Activated CD4-positive, alpha-beta T cell treated with anti-CD3 and anti-CD28 coated beads, Interleukin-2, amount 10 ng/mL, durations not matched to agents 24 days and 14 days (primary cell): ENCODE measurements at regions of chr3 and their contacts with region 1.

Region 1: DNA sequence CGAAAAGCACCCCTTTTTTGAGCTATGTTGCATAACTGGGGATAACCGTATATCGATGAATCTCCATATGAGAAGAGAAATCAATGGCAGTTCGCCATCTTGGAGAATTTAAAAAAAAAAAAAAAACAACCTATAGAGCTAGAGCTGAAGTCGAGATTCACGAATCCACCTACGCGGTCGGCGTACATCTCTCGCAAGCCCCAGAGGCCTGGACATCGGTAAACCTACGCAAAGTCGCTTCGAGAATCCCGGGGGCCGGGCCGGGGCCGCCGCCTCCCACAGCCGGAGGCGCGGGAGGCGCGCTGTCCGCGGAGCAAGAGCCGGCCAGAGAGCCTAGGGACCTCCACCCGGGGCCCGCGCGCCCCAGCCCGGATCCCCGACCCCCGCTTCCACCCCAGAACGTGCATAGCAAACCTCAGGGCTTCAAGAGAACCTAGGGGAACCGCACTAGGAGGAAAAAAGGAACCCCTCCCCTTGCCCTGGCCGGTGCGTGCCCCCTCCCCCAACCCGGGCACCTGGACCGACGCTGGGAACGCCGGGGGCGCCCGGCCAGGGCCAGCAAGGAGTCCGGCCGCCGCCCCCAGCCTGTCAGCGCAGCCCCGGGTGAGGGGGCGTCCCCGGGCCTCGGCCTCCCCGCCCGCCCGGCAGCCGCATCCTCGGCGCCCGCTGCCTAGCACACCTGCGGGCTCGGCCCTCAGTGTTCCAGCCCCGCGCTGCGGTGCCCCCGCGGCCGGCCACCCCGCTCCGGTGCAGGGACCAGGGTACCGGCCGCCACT is 567 bp downstream of the PFN2 start:
- DNase-seq: peak; percentile 91
- H3K4me3 Mint-ChIP-seq: peak overlapping the region; percentile 88
- H3K27ac Mint-ChIP-seq: peak overlapping the region; percentile 72
- H3K4me1 Mint-ChIP-seq: peaks cover 15% of the 10 kb centered on the region
- H3K27me3 Mint-ChIP-seq: peaks cover 52% of the 10 kb centered on the region

Region 2: GRCh38 chr3:148518520-148518919 is 1451.6 kb before region 1 on chr3:
- intact Hi-C with region 1: no loop called
- DNase-seq: no peak
- H3K4me3 Mint-ChIP-seq: no peak overlapping the region
- H3K27ac Mint-ChIP-seq: no peak overlapping the region
- H3K4me1 Mint-ChIP-seq: no peaks in the 10 kb centered on the region
- H3K27me3 Mint-ChIP-seq: no peaks in the 10 kb centered on the region

Region 3: DNA sequence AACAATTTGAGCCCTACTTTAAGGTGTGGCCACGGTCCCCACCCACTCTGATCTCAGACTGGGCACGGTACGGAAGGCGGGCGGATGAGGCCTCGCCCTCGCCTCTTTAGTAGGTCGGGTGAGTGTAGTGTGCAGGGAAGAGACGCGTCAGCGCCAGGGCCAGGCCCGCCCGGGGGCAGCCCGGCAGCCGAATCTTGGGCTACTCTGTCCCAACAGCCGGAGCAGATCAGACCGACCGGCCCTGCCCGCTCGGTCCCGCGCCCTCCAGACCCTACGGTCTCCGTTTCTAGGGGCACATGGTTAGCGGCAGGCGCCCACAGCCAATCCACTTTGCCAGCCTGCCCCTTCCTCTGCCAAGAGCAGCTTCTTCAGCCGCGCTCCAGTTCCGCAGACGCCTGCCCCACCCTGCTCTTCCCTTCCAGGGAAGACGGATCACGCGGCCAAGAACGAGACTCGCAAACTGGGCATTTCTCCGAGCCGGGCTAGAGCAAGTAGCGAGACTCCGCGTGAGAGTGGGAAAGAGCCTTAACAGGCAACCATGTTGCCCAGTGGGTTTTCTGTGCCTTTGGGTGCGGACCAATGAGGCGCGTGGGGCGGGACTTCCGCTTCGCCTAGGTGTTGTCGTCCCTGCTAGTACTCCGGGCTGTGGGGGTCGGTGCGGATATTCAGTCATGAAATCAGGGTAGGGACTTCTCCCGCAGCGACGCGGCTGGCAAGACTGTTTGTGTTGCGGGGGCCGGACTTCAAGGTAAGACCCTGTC is 157.3 kb before region 1 on chr3 and contains the start of gene RNF13:
- intact Hi-C with region 1: loop called (anchors 10 kb)
- DNase-seq: peak; percentile 98
- H3K4me3 Mint-ChIP-seq: peak within 1 kb of the TSS; percentile 97
- H3K27ac Mint-ChIP-seq: peak within 1 kb of the TSS; percentile 100
- H3K4me1 Mint-ChIP-seq: peaks cover 44% of the 10 kb centered on the region
- H3K27me3 Mint-ChIP-seq: peaks cover 11% of the 10 kb centered on the region
- total RNA-seq, gene RNF13: 31.6 and 36.7 TPM in 2 replicates

Region 4: GRCh38 chr3:149936812-149937233 is 33.3 kb before region 1 on chr3:
- intact Hi-C with region 1: loop called (anchors 5 kb)
- DNase-seq: peak; percentile 77
- H3K4me3 Mint-ChIP-seq: no peak overlapping the region
- H3K27ac Mint-ChIP-seq: no peak overlapping the region
- H3K4me1 Mint-ChIP-seq: peaks cover 18% of the 10 kb centered on the region
- H3K27me3 Mint-ChIP-seq: no peaks in the 10 kb centered on the region

Region 5: GRCh38 chr3:150183678-150184425 is 213.7 kb after region 1 on chr3:
- intact Hi-C with region 1: loop called (anchors 1 kb)
- DNase-seq: peak; percentile 81
- H3K4me3 Mint-ChIP-seq: no peak overlapping the region
- H3K27ac Mint-ChIP-seq: no peak overlapping the region
- H3K4me1 Mint-ChIP-seq: no peaks in the 10 kb centered on the region
- H3K27me3 Mint-ChIP-seq: peaks cover 26% of the 10 kb centered on the region

Region 6: DNA sequence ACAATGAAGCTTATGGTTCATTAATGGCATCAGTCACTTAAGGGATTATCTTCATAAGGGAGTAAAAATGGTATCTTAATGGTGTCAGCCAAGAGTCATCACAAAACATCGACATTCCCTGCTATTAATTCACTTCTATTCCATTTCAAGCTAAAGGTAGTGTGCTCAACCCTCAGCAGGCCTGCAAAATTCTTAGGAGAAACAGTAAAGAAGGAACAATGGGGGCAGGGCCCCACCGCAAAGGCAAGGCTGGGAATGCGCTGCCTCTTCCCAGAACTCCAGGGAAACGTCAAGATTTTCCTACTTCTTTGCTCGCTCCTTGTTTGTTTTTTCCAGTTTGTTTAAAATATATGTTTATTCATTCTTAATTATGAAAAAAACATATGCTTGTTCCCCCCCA is 250.7 kb after region 1 on chr3:
- intact Hi-C with region 1: loop called (anchors 2 kb)
- DNase-seq: no peak
- H3K4me3 Mint-ChIP-seq: no peak overlapping the region
- H3K27ac Mint-ChIP-seq: no peak overlapping the region
- H3K4me1 Mint-ChIP-seq: peaks cover 2% of the 10 kb centered on the region
- H3K27me3 Mint-ChIP-seq: peaks cover 38% of the 10 kb centered on the region

Region 7: GRCh38 chr3:150495563-150496168 is 525.5 kb after region 1 on chr3:
- intact Hi-C with region 1: loop called (anchors 10 kb)
- DNase-seq: peak; percentile 72
- H3K4me3 Mint-ChIP-seq: no peak overlapping the region
- H3K27ac Mint-ChIP-seq: no peak overlapping the region
- H3K4me1 Mint-ChIP-seq: peaks cover 1% of the 10 kb centered on the region
- H3K27me3 Mint-ChIP-seq: peaks cover 11% of the 10 kb centered on the region